CD14-positive monocyte (primary cell): ENCODE measurements at regions of chr20 and their contacts with region 1.

Region 1: GRCh38 chr20:25696384-25697131 is at the start of gene ZNF337:
- DNase-seq: peak; percentile 80 to 85 (median 84)
- H3K4me3 ChIP-seq: peak within 1 kb of the TSS; percentile 49 to 94 (median 78)
- H3K4me3 Mint-ChIP-seq: peak within 1 kb of the TSS; percentile 91 to 93
- H3K27ac ChIP-seq: peak within 1 kb of the TSS in 1 of 2 donors; percentile 77
- H3K27ac Mint-ChIP-seq: peak within 1 kb of the TSS; percentile 57 to 88 (median 67)
- H3K4me1 ChIP-seq: peaks cover 10 to 15% of the 10 kb centered on the region in 2 donors
- H3K4me1 Mint-ChIP-seq: peaks cover 14% of the 10 kb centered on the region
- H3K27me3 ChIP-seq: no peaks in the 10 kb centered on the region
- H3K27me3 Mint-ChIP-seq: peaks cover 0 to 3% (median 0%) of the 10 kb centered on the region in 3 donors
- CTCF ChIP-seq: no peak
- polyA plus RNA-seq, gene ZNF337: 2.1 to 12.0 (median 3.0) TPM

Region 2: DNA sequence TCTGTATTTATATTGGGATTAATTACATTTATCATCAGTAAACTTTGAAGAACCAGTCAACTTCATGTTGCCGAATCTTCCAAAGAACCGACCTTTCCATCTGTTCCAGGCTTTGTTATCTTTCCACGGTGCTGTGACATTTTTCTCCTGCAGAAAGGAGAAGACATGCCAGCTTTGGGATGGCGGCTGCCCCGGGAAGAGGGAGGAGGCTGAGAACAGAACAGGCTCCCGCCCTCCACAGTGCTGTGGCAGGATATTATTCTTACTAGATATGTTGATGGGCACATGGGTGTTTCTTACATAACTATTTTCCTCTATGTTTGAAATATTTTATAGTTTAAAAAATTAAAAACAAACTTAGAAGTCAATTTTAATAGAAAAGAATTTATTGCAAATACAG is 244.2 kb before region 1 on chr20:
- intact Hi-C with region 1: no loop called
- DNase-seq: no peak
- H3K4me3 ChIP-seq: no peak overlapping the region
- H3K4me3 Mint-ChIP-seq: no peak overlapping the region
- H3K27ac ChIP-seq: no peak overlapping the region
- H3K27ac Mint-ChIP-seq: no peak overlapping the region
- H3K4me1 ChIP-seq: no peaks in the 10 kb centered on the region
- H3K4me1 Mint-ChIP-seq: peaks cover 6% of the 10 kb centered on the region
- H3K27me3 ChIP-seq: no peaks in the 10 kb centered on the region
- H3K27me3 Mint-ChIP-seq: peaks cover 0 to 1% (median 0%) of the 10 kb centered on the region in 3 donors
- CTCF ChIP-seq: no peak

Region 3: GRCh38 chr20:25623736-25624499 is 72.6 kb before region 1 on chr20 and contains the start of gene NANP:
- intact Hi-C with region 1: loop called (anchors 5 kb)
- DNase-seq: peak; percentile 93 to 96 (median 94)
- H3K4me3 ChIP-seq: peak within 1 kb of the TSS; percentile 54 to 87 (median 66)
- H3K4me3 Mint-ChIP-seq: peak within 1 kb of the TSS; percentile 92 to 93
- H3K27ac ChIP-seq: peak within 1 kb of the TSS; percentile 73 to 76
- H3K27ac Mint-ChIP-seq: peak within 1 kb of the TSS; percentile 86 to 96 (median 93)
- H3K4me1 ChIP-seq: peaks cover 23 to 33% of the 10 kb centered on the region in 2 donors
- H3K4me1 Mint-ChIP-seq: peaks cover 27% of the 10 kb centered on the region
- H3K27me3 ChIP-seq: no peaks in the 10 kb centered on the region
- H3K27me3 Mint-ChIP-seq: peaks cover 2 to 6% (median 5%) of the 10 kb centered on the region in 3 donors
- CTCF ChIP-seq: no peak
- polyA plus RNA-seq, gene NANP: 1.7 to 2.6 (median 2.2) TPM

Region 4: DNA sequence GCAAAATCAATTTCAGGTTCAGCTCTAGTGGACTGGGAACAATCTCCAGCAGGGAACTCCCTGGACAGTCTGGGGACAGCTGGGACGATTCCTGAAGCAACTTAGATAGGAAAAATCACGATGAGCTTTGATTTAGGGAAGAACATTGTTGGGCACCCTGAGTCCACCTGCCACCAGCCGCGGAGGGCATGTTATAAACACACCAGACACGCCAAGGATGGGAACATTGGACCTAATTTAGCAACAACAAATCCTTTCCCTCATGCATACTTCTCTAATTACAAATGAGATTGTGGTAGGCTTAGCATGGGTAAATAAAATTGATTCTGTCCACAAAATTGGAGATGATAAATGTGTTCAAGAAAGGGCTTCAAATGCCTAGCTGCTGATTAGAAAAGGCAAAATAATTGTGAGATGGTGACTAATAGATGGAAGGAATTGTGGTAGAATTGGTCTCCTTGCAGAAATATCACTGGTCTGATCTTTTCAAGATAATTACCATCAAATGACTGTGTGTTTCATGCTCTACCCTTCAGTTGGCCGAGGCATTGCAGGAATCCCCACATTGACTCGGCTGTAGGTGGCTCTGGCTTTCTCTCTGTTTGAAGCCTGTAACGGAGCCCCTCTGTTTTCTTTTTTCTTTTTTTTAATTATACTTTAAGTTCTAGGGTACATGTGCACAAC is 66.6 kb before region 1 on chr20:
- intact Hi-C with region 1: loop called in 1 of 2 experiments (anchors 5 kb)
- DNase-seq: no peak
- H3K4me3 ChIP-seq: no peak overlapping the region
- H3K4me3 Mint-ChIP-seq: no peak overlapping the region
- H3K27ac ChIP-seq: no peak overlapping the region
- H3K27ac Mint-ChIP-seq: peak overlapping the region in 1 of 7 donors; percentile 12
- H3K4me1 ChIP-seq: no peaks in the 10 kb centered on the region
- H3K4me1 Mint-ChIP-seq: no peaks in the 10 kb centered on the region
- H3K27me3 ChIP-seq: no peaks in the 10 kb centered on the region
- H3K27me3 Mint-ChIP-seq: peaks cover 0 to 2% (median 2%) of the 10 kb centered on the region in 3 donors
- CTCF ChIP-seq: no peak

Region 5: DNA sequence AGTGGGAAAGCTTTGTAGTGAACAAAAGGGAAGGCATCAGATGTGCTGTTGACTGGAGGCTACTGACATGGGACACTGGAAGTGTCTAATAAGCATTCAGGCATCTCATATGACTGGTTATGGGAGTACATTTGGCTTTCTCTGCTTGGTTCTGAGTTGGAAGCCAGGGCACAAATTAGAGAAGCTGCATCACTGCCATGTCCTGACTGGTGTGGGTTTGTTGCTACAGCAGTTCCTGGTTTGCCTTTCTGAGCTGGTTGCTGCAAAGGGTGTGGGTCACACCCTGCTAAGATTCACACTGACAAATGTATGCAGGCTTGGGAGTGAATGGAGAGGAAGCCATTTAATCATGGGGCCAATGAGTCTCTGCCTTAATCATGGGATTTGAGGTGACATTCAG is 36.6 kb before region 1 on chr20:
- intact Hi-C with region 1: no loop called
- DNase-seq: no peak
- H3K4me3 ChIP-seq: no peak overlapping the region
- H3K4me3 Mint-ChIP-seq: no peak overlapping the region
- H3K27ac ChIP-seq: no peak overlapping the region
- H3K27ac Mint-ChIP-seq: no peak overlapping the region
- H3K4me1 ChIP-seq: no peaks in the 10 kb centered on the region
- H3K4me1 Mint-ChIP-seq: no peaks in the 10 kb centered on the region
- H3K27me3 ChIP-seq: no peaks in the 10 kb centered on the region
- H3K27me3 Mint-ChIP-seq: no peaks in the 10 kb centered on the region
- CTCF ChIP-seq: no peak